Lower lobe of right lung (tissue), 2 donors: ENCODE measurements at regions of chr5 and their contacts with region 1.

Region 1: GRCh38 chr5:108260117-108260857 is 121.6 kb downstream of the FBXL17 start:
- DNase-seq: peak; percentile 55
- ATAC-seq: peak; percentile 95
- H3K4me3 ChIP-seq: peak overlapping the region; percentile 18
- H3K27ac ChIP-seq: no peak overlapping the region
- H3K4me1 ChIP-seq: peaks cover 22% of the 10 kb centered on the region
- H3K27me3 ChIP-seq: no peaks in the 10 kb centered on the region
- CTCF ChIP-seq: peak; percentile 95

Region 2: GRCh38 chr5:108345541-108346171 is 85.4 kb after region 1 on chr5:
- intact Hi-C with region 1: loop called (anchors 10 kb)
- DNase-seq: no peak
- ATAC-seq: no peak
- H3K4me3 ChIP-seq: no peak overlapping the region
- H3K27ac ChIP-seq: no peak overlapping the region
- H3K4me1 ChIP-seq: no peaks in the 10 kb centered on the region
- H3K27me3 ChIP-seq: no peaks in the 10 kb centered on the region
- CTCF ChIP-seq: peak; percentile 43